ENCODE measurements at regions of chr4 and their contacts with region 1.

Region 1: GRCh38 chr4:82373816-82374625 is at the start of gene HNRNPD:
- DNase-seq: peak; percentile 79 to 96 (median 93)
- ATAC-seq: peak; percentile 93
- H3K4me3 ChIP-seq: peak within 1 kb of the TSS; percentile 94
- H3K4me3 Mint-ChIP-seq: peak within 1 kb of the TSS; percentile 91 to 100 (median 97)
- H3K27ac ChIP-seq: peak within 1 kb of the TSS; percentile 98
- H3K27ac Mint-ChIP-seq: peak within 1 kb of the TSS; percentile 95 to 100 (median 99)
- H3K4me1 ChIP-seq: peaks cover 28 to 31% of the 10 kb centered on the region in 2 donors
- H3K4me1 Mint-ChIP-seq: peaks cover 35 to 62% (median 54%) of the 10 kb centered on the region in 7 donors
- H3K27me3 ChIP-seq: no peaks in the 10 kb centered on the region
- H3K27me3 Mint-ChIP-seq: peaks cover 0 to 3% (median 0%) of the 10 kb centered on the region in 5 donors
- total RNA-seq, gene HNRNPD: 200 to 355 (median 238) TPM

Region 2: GRCh38 chr4:82217986-82218715 is 155.9 kb before region 1 on chr4:
- CTCF ChIA-PET with region 1: interaction called, 3 read pairs
- POLR2A ChIA-PET with region 1: no interaction called
- intact Hi-C with region 1: loop called in 1 of 2 experiments (anchors 5 kb)
- DNase-seq: peak in 7 of 9 donors; percentile 2 to 36 (median 14)
- ATAC-seq: peak; percentile 50
- H3K4me3 ChIP-seq: no peak overlapping the region
- H3K4me3 Mint-ChIP-seq: no peak overlapping the region
- H3K27ac ChIP-seq: no peak overlapping the region
- H3K27ac Mint-ChIP-seq: no peak overlapping the region
- H3K4me1 ChIP-seq: peaks cover 10 to 12% of the 10 kb centered on the region in 2 donors
- H3K4me1 Mint-ChIP-seq: peaks cover 9 to 53% (median 38%) of the 10 kb centered on the region in 7 donors
- H3K27me3 ChIP-seq: no peaks in the 10 kb centered on the region
- H3K27me3 Mint-ChIP-seq: peaks cover 0 to 14% (median 0%) of the 10 kb centered on the region in 5 donors

Region 3: DNA sequence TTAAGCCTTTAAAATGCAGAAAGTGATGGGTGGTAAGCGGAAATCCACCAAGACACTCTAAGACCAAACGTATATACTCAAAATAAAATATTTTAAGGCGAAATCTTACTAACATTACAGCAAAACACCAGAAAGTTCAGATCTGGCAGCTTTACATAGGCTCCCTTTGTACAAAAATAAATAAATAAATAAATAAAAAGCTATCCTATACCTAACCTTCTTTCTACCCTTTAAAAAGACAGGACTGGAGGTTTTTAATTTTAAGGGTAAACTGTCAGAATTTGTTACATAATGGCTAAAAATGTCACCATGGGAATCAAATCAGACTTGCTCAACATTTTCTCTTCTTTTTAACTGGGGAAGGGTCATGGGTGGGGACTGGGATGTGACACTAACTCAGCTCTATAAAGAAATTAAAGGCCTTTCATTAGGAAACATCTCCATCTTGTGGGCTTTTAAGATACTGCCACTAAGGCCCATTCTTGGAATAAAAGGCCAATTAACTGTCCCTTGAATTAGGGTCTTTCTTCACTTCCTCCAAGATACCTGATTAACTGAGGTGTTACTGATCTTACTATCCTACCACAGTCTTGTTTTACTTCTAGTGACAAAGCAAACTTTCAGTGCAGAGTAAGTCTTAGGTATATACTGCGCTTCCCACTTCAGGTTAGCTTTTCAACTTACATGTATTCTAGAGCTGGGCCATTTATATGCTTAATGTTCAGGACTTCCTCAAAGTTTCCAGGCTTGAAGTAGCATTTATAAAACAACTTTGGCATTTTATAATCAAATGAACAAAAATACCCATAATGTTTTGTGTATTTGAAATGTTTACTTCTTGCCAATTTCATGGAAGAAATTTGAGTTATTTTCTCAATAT is 13.5 kb before region 1 on chr4:
- CTCF ChIA-PET with region 1: interaction called, 8 read pairs
- POLR2A ChIA-PET with region 1: interaction called, 23 read pairs
- intact Hi-C with region 1: loop called (anchors 1 to 2 kb)
- DNase-seq: peak in 6 of 9 donors; percentile 17 to 33 (median 31)
- ATAC-seq: peak; percentile 70
- H3K4me3 ChIP-seq: no peak overlapping the region
- H3K4me3 Mint-ChIP-seq: peak overlapping the region in 7 of 10 donors; percentile 0 to 56 (median 36)
- H3K27ac ChIP-seq: peak overlapping the region; percentile 18
- H3K27ac Mint-ChIP-seq: peak overlapping the region in 8 of 9 donors; percentile 34 to 85 (median 54)
- H3K4me1 ChIP-seq: peaks cover 62 to 74% of the 10 kb centered on the region in 2 donors
- H3K4me1 Mint-ChIP-seq: peaks cover 64 to 98% (median 89%) of the 10 kb centered on the region in 7 donors
- H3K27me3 ChIP-seq: no peaks in the 10 kb centered on the region
- H3K27me3 Mint-ChIP-seq: no peaks in the 10 kb centered on the region

Region 4: GRCh38 chr4:82865592-82865991 is 491.6 kb after region 1 on chr4:
- CTCF ChIA-PET with region 1: no interaction called
- POLR2A ChIA-PET with region 1: no interaction called
- intact Hi-C with region 1: loop called in 1 of 2 experiments (anchors 10 kb)
- DNase-seq: peak in 7 of 9 donors; percentile 20 to 53 (median 30)
- ATAC-seq: peak; percentile 70
- H3K4me3 ChIP-seq: no peak overlapping the region
- H3K4me3 Mint-ChIP-seq: peak overlapping the region in 9 of 10 donors; percentile 33 to 79 (median 63)
- H3K27ac ChIP-seq: peak overlapping the region; percentile 56
- H3K27ac Mint-ChIP-seq: peak overlapping the region; percentile 44 to 94 (median 86)
- H3K4me1 ChIP-seq: peaks cover 13 to 19% of the 10 kb centered on the region in 2 donors
- H3K4me1 Mint-ChIP-seq: peaks cover 19 to 43% (median 33%) of the 10 kb centered on the region in 7 donors
- H3K27me3 ChIP-seq: no peaks in the 10 kb centered on the region
- H3K27me3 Mint-ChIP-seq: no peaks in the 10 kb centered on the region

Region 5: GRCh38 chr4:82900331-82901128 is 526.5 kb after region 1 on chr4 and contains the start of gene THAP9:
- CTCF ChIA-PET with region 1: no interaction called
- POLR2A ChIA-PET with region 1: interaction called, 4 read pairs
- intact Hi-C with region 1: loop called (anchors 1 to 2 kb)
- DNase-seq: peak; percentile 92 to 100 (median 98)
- ATAC-seq: peak; percentile 91
- H3K4me3 ChIP-seq: peak within 1 kb of the TSS; percentile 91
- H3K4me3 Mint-ChIP-seq: no peak within 1 kb of the TSS
- H3K27ac ChIP-seq: peak within 1 kb of the TSS; percentile 98
- H3K27ac Mint-ChIP-seq: no peak within 1 kb of the TSS
- H3K4me1 ChIP-seq: peaks cover 13 to 15% of the 10 kb centered on the region in 2 donors
- H3K4me1 Mint-ChIP-seq: peaks cover 0 to 30% (median 15%) of the 10 kb centered on the region in 7 donors
- H3K27me3 ChIP-seq: no peaks in the 10 kb centered on the region
- H3K27me3 Mint-ChIP-seq: peaks cover 0 to 2% (median 0%) of the 10 kb centered on the region in 5 donors
- total RNA-seq, gene THAP9: 2.2 to 4.9 (median 4.4) TPM

Region 6: DNA sequence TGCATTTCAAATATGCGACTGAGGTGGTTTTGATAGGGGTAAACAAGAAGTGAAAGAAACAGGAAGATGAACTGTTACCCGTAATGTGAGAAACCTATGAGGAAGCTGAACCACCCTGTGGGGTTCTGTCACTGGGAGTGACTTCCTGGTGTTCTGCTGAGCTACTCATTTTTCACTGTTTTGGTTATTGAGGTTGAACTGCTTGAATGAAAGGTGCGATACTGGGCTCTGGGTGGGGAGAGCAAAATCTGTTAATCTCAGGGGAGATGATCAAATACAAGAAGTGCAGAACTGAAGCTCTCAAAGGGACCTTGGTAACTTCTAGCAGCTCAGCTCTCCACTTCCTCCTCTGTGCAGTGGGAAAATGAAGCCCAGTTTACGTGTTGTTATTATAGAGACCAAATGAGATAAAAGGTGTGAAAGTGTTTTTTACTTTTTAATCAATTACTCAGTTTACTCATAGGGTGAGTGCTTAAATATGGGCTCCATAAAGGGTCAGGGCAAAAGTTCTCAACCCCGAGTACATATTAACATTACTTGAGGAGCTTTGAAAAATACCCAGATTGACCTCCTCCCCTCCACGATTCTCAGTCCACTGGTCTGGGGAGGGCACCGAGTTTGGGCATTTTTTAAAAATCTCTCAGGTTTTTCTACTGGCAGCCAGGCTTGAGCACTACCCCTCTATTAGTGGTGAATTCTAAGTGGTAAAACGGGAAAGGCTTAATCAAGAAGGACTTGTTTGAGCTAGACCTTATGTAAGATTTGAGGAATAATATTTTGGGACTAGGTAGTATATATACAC is 843.9 kb after region 1 on chr4:
- CTCF ChIA-PET with region 1: no interaction called
- POLR2A ChIA-PET with region 1: no interaction called
- intact Hi-C with region 1: loop called in 1 of 2 experiments (anchors 5 kb)
- DNase-seq: peak in 8 of 9 donors; percentile 52 to 91 (median 84)
- ATAC-seq: peak; percentile 95
- H3K4me3 ChIP-seq: peak overlapping the region; percentile 23
- H3K4me3 Mint-ChIP-seq: peak overlapping the region; percentile 57 to 84 (median 72)
- H3K27ac ChIP-seq: peak overlapping the region; percentile 78
- H3K27ac Mint-ChIP-seq: peak overlapping the region; percentile 88 to 96 (median 92)
- H3K4me1 ChIP-seq: peaks cover 65 to 77% of the 10 kb centered on the region in 2 donors
- H3K4me1 Mint-ChIP-seq: peaks cover 56 to 83% (median 74%) of the 10 kb centered on the region in 7 donors
- H3K27me3 ChIP-seq: no peaks in the 10 kb centered on the region
- H3K27me3 Mint-ChIP-seq: no peaks in the 10 kb centered on the region

Measured in naive thymus-derived CD4-positive, alpha-beta T cell (primary cell).